ENCODE measurements at regions of chr15 and their contacts with region 1.

Region 1: DNA sequence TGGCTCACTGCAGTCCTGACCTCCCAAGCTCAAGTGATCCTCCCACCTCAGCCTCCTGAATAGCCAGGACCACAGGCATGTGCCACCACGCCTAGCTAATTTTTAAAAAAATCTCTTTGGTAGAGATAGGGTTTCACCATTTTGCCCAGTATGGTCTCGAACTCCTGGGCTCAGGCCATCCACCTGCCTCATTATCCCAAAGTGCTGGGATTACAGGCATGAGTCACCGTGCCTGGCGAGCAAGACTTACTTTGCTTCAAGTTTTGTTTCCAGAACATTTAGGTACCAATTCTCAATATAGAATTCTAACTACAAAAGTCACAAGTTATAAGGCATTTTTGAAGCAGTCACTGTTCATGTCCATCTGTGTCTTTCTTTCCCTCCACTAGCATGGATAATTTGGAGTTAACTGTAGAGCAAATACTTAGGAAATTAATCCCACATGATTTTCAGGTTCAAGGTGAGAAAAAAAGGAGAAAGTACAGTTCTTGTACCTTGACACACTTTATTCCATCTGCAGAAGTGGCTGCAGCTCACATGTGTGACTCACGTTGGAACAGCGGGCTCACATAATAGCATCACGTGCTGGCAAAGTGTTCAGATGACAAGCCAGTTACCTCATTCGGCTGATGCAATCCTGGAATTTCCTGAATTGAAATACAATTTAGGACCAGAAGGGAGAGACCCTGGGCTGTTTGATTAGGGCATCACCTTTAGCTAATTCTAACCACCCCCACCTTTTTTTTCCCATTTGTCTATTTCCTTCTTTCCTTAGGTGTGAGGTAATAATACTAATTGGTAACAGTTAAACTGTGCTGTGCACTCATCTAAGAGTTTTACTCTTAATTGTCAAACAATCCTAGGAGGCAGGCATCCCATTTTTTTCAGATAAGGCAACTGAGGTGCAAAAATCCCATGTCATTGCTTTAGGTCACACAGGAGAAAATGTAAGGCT is 46.9 kb upstream of the NEDD4 start:
- DNase-seq: no peak
- H3K4me3 ChIP-seq: no peak overlapping the region
- H3K27ac ChIP-seq: peak overlapping the region; percentile 64 to 82; a peak in 3 of 4 replicates
- H3K4me1 ChIP-seq: peaks cover 0 to 19% of the 10 kb centered on the region in 2 experiments; a peak in 3 of 4 replicates
- H3K27me3 ChIP-seq: no peaks in the 10 kb centered on the region
- CTCF ChIP-seq: no peak
- EP300 ChIP-seq: peak; percentile 34 to 85; a peak in 3 of 4 replicates
- RAD21 ChIP-seq: no peak

Region 2: DNA sequence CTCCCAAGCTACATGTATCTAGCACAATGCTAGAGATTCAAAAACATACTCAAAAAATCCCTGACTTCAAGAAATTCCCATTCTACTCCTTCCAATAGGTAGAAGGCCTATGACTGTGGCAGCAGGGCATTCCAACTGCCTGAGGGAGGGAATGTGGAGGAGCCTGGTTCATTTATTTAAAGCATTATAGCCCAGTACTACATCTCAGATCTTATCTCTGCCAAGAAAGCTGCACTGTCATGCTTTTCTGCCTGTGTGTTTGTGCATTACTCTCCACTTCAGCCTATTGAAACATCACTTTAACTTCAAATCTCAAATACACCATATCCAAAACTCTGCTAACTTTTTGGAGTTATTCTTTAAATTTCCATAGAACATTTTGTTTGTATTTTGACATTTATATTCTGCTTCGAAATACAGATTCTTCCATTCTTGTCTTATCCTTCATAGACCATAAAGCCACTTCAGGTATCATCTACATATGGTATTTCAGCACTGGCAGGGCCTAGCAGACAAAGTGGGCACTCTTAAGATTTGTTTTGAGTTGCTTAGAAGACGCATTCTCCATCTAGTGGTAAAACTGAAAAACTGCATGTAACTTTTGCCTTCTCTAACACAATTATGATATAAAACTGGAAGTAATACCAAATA is 12.2 kb after region 1 on chr15:
- CTCF ChIA-PET with region 1: interaction called, 11 read pairs
- POLR2A ChIA-PET with region 1: no interaction called
- DNase-seq: peak; percentile 36
- H3K4me3 ChIP-seq: no peak overlapping the region
- H3K27ac ChIP-seq: peak overlapping the region; percentile 19 to 62
- H3K4me1 ChIP-seq: peaks cover 4 to 10% of the 10 kb centered on the region in 2 experiments; a peak in 1 of 4 replicates
- H3K27me3 ChIP-seq: no peaks in the 10 kb centered on the region
- CTCF ChIP-seq: peak; percentile 84
- EP300 ChIP-seq: no peak
- RAD21 ChIP-seq: peak; percentile 76